ENCODE measurements at regions of chr2 and their contacts with region 1.

Region 1: GRCh38 chr2:197310271-197310985 is at the start of gene ANKRD44:
- DNase-seq: peak; percentile 91
- H3K4me3 Mint-ChIP-seq: peak within 1 kb of the TSS; percentile 90
- H3K27ac Mint-ChIP-seq: peak within 1 kb of the TSS; percentile 96
- H3K4me1 Mint-ChIP-seq: peaks cover 58% of the 10 kb centered on the region
- H3K27me3 Mint-ChIP-seq: no peaks in the 10 kb centered on the region
- total RNA-seq, gene ANKRD44: 87.8 to 101 TPM

Region 2: GRCh38 chr2:195498176-195498575 is 1812.3 kb before region 1 on chr2:
- CTCF ChIA-PET with region 1: no interaction called
- intact Hi-C with region 1: no loop called
- DNase-seq: peak; percentile 76
- H3K4me3 Mint-ChIP-seq: no peak overlapping the region
- H3K27ac Mint-ChIP-seq: no peak overlapping the region
- H3K4me1 Mint-ChIP-seq: peaks cover 44% of the 10 kb centered on the region
- H3K27me3 Mint-ChIP-seq: no peaks in the 10 kb centered on the region

Region 3: DNA sequence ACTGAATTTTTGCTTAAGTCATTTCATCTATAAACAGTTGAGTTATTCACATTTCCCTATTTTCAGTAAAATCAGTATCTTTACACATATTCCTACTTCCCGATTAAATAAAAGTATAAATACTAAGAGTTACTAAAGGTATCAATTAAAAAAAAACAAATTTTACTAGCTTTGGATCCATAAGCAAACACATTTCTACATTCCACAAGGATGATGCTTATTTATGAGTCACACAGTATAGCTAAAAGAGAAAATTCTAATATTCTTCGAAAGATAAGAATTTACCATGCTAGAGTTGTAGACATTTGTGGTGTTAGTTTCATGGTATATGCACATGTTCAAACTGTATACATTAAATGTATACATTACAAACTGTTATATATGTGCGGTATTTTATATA is 407.6 kb before region 1 on chr2:
- CTCF ChIA-PET with region 1: no interaction called
- intact Hi-C with region 1: no loop called
- DNase-seq: no peak
- H3K4me3 Mint-ChIP-seq: no peak overlapping the region
- H3K27ac Mint-ChIP-seq: no peak overlapping the region
- H3K4me1 Mint-ChIP-seq: peaks cover 2% of the 10 kb centered on the region
- H3K27me3 Mint-ChIP-seq: no peaks in the 10 kb centered on the region

Region 4: DNA sequence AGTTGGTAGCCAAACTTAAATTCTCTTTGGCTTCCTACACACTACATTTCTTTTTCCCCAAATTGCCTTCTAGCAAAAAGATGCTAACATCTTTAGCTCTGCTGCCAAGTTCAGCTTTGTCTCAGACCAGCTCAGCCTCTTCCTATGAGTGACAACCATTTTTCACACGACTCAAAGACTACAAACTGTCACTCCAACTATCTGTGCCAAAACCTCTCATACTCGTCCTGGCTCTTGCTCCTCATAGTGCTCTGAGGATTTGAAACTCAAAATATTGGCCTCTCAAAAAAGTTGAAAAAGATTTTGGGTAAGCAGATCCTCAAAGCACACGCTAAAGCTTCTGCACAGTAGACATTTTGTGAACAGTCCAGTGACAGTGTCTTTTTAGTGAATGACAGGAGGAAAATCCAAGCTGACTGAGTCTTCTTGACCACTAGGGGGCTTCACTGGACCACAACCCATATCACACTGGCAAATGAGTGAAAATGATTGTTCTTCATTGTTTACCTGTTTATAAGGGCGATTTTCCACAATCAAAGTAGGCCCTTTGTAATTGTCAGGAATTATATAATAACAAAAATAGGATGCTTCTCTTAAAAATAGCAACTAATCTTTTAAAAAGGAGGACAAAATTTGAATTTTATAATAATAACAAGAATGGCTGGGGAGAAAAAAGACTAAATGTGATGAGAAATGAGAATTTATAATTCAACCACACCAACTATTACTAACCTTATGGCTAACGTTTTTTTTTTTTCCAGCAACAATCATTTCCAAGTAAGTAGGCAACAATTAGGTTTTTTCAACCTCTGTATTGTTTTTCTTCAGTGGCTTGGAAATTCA is 298.4 kb before region 1 on chr2:
- CTCF ChIA-PET with region 1: no interaction called
- intact Hi-C with region 1: loop called (anchors 1 kb)
- DNase-seq: peak; percentile 42
- H3K4me3 Mint-ChIP-seq: no peak overlapping the region
- H3K27ac Mint-ChIP-seq: peak overlapping the region; percentile 81
- H3K4me1 Mint-ChIP-seq: peaks cover 2% of the 10 kb centered on the region
- H3K27me3 Mint-ChIP-seq: no peaks in the 10 kb centered on the region

Region 5: DNA sequence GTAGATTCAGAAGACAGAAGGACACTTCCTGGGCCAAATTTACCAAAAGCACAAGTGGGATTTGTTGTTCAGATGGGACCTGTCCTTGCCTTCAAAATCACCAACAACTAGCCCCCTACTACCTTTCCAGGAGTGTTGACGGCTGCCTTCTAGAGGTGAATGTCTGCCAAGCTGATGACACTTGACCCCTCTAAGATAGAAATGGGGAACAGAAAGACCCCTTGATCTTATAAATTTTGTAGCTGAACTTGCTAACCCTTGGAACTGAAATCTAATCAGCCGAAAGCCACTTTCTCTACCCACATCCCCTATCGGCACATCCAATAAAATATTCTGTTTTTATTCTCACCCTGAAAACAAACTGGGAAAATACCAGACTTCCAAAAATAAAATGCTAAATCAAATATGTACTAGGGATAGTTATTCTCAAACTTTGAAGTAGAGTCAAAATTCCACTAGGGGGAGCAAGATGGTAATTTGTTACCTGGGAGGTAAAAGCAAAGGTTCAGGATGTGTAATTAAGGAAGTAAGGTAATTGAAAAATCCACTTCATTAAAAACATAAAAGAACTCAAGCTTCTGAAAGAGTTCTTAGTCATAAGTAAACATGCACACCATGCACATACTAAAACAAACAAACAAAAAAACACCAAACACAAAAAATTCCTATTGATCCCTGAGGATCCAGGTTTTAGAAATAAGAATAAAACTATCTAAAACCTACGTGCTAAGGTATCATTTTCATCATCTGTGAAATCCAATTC is 119.1 kb before region 1 on chr2:
- CTCF ChIA-PET with region 1: interaction called, 66 read pairs
- intact Hi-C with region 1: loop called (anchors 1 kb)
- DNase-seq: no peak
- H3K4me3 Mint-ChIP-seq: peak overlapping the region; percentile 19
- H3K27ac Mint-ChIP-seq: peak overlapping the region; percentile 85
- H3K4me1 Mint-ChIP-seq: peaks cover 74% of the 10 kb centered on the region
- H3K27me3 Mint-ChIP-seq: no peaks in the 10 kb centered on the region

Region 6: GRCh38 chr2:197239434-197239833 is 71.0 kb before region 1 on chr2:
- CTCF ChIA-PET with region 1: interaction called, 4 read pairs
- intact Hi-C with region 1: loop called (anchors 1 kb)
- DNase-seq: no peak
- H3K4me3 Mint-ChIP-seq: peak overlapping the region; percentile 78
- H3K27ac Mint-ChIP-seq: peak overlapping the region; percentile 91
- H3K4me1 Mint-ChIP-seq: peaks cover 85% of the 10 kb centered on the region
- H3K27me3 Mint-ChIP-seq: no peaks in the 10 kb centered on the region

Region 7: GRCh38 chr2:197286805-197287598 is 23.4 kb before region 1 on chr2:
- CTCF ChIA-PET with region 1: interaction called, 20 read pairs
- intact Hi-C with region 1: loop called (anchors 2 kb)
- DNase-seq: peak; percentile 74
- H3K4me3 Mint-ChIP-seq: peak overlapping the region; percentile 64
- H3K27ac Mint-ChIP-seq: peak overlapping the region; percentile 97
- H3K4me1 Mint-ChIP-seq: peaks cover 81% of the 10 kb centered on the region
- H3K27me3 Mint-ChIP-seq: no peaks in the 10 kb centered on the region

Region 8: GRCh38 chr2:197378494-197379307 is 68.3 kb after region 1 on chr2:
- CTCF ChIA-PET with region 1: interaction called, 7 read pairs
- intact Hi-C with region 1: loop called (anchors 1 kb)
- DNase-seq: peak; percentile 78
- H3K4me3 Mint-ChIP-seq: peak overlapping the region; percentile 22
- H3K27ac Mint-ChIP-seq: no peak overlapping the region
- H3K4me1 Mint-ChIP-seq: peaks cover 15% of the 10 kb centered on the region
- H3K27me3 Mint-ChIP-seq: peaks cover 5% of the 10 kb centered on the region

Region 9: GRCh38 chr2:197480165-197481036 is 170.0 kb after region 1 on chr2:
- CTCF ChIA-PET with region 1: no interaction called
- intact Hi-C with region 1: no loop called
- DNase-seq: no peak
- H3K4me3 Mint-ChIP-seq: no peak overlapping the region
- H3K27ac Mint-ChIP-seq: no peak overlapping the region
- H3K4me1 Mint-ChIP-seq: peaks cover under 1% of the 10 kb centered on the region
- H3K27me3 Mint-ChIP-seq: no peaks in the 10 kb centered on the region

Region 10: DNA sequence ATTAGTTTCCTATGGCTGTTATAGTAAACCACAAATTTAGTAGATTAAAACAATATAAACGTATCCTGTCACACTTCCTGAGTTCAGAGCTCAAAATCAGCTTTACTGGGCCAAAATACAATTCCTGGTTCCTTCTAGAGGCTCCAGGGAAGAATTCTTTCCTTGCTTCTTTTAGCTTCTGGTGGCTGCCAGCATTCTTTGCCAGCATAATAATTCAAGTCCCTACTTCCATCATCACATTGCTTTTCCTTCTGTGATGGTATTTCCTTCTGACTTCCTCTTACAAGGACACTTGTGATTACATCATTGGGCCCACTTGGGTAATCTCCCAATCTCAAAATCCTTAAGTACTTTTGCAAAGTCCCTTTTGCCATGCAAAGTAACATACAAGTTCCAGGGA is 246.0 kb after region 1 on chr2:
- CTCF ChIA-PET with region 1: no interaction called
- intact Hi-C with region 1: no loop called
- DNase-seq: no peak
- H3K4me3 Mint-ChIP-seq: no peak overlapping the region
- H3K27ac Mint-ChIP-seq: peak overlapping the region; percentile 30
- H3K4me1 Mint-ChIP-seq: no peaks in the 10 kb centered on the region
- H3K27me3 Mint-ChIP-seq: no peaks in the 10 kb centered on the region

Region 11: GRCh38 chr2:197889041-197889440 is 578.6 kb after region 1 on chr2:
- CTCF ChIA-PET with region 1: no interaction called
- intact Hi-C with region 1: loop called (anchors 10 kb)
- DNase-seq: peak; percentile 76
- H3K4me3 Mint-ChIP-seq: peak overlapping the region; percentile 21
- H3K27ac Mint-ChIP-seq: peak overlapping the region; percentile 94
- H3K4me1 Mint-ChIP-seq: peaks cover 74% of the 10 kb centered on the region
- H3K27me3 Mint-ChIP-seq: no peaks in the 10 kb centered on the region

Measured in activated naive CD4-positive, alpha-beta T cell treated with anti-CD3 and anti-CD28 coated beads for 36 hours (primary cell).